ENCODE measurements at regions of chr6 and their contacts with region 1.

Region 1: GRCh38 chr6:13296536-13296997 is 31.8 kb downstream of the TBC1D7 start:
- DNase-seq: no peak
- ATAC-seq: peak; percentile 11
- H3K4me3 Mint-ChIP-seq: peak overlapping the region; percentile 48
- H3K27ac Mint-ChIP-seq: peak overlapping the region; percentile 74
- H3K4me1 Mint-ChIP-seq: peaks cover 71% of the 10 kb centered on the region
- H3K27me3 Mint-ChIP-seq: no peaks in the 10 kb centered on the region
- CTCF ChIP-seq: no peak

Region 2: DNA sequence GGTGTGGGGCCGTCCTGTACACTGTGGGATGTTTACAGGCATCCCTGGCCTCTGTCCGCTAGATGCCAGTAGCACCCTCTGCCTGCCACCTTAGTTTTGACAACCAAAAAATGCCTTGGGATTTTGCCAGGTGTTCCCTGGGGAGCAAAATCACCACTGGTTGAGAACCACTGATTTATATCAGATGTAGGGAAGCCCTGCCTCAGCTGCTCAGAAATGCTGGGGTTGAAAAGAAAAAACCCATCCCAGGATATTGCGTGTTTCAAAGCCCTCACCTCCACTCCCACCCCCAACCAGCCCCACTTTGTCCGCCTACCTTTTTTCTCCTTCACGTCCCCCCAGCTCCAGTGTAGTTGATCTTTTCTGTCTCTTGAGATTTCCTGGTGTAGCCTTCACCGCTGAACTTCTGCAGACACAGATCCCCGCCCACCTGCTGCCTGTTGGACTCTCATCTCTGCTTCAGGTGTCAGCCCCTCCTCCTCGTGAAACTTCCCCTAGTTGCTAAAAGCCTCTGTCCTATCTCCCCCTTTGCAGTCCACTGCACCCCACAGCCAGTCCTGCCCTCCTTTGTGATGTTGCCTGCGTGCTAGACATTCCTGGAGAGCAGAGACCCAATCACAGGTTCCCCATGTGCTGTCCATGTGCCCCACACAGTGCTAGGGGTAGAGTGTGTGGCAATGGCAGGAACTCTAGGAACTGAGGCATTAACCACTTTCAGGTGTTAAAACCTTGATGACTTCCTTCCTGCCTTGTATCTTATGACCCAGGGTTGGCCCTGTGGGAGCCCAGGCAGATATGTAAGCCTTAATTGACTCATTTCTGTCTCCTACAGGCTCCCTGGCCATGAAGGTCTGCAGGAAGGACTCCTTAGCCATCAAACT is 67.1 kb before region 1 on chr6:
- CTCF ChIA-PET with region 1: no interaction called
- POLR2A ChIA-PET with region 1: no interaction called
- intact Hi-C with region 1: loop called (anchors 2 kb)
- DNase-seq: peak; percentile 28
- ATAC-seq: peak; percentile 84
- H3K4me3 Mint-ChIP-seq: peak overlapping the region; percentile 7
- H3K27ac Mint-ChIP-seq: peak overlapping the region; percentile 27
- H3K4me1 Mint-ChIP-seq: peaks cover 30% of the 10 kb centered on the region
- H3K27me3 Mint-ChIP-seq: peaks cover 7% of the 10 kb centered on the region
- CTCF ChIP-seq: no peak

Region 3: GRCh38 chr6:13261464-13261994 is 35.0 kb before region 1 on chr6:
- CTCF ChIA-PET with region 1: interaction called, 3 read pairs
- POLR2A ChIA-PET with region 1: interaction called, 35 read pairs
- intact Hi-C with region 1: loop called (anchors 1 kb)
- DNase-seq: peak; percentile 57
- ATAC-seq: peak; percentile 74
- H3K4me3 Mint-ChIP-seq: peak overlapping the region; percentile 74
- H3K27ac Mint-ChIP-seq: peak overlapping the region; percentile 75
- H3K4me1 Mint-ChIP-seq: peaks cover 92% of the 10 kb centered on the region
- H3K27me3 Mint-ChIP-seq: no peaks in the 10 kb centered on the region
- CTCF ChIP-seq: no peak

Region 4: GRCh38 chr6:13277836-13278563 is 18.6 kb before region 1 on chr6:
- CTCF ChIA-PET with region 1: interaction called, 5 read pairs
- POLR2A ChIA-PET with region 1: interaction called, 67 read pairs
- intact Hi-C with region 1: loop called (anchors 1 kb)
- DNase-seq: no peak
- ATAC-seq: peak; percentile 26
- H3K4me3 Mint-ChIP-seq: peak overlapping the region; percentile 58
- H3K27ac Mint-ChIP-seq: peak overlapping the region; percentile 77
- H3K4me1 Mint-ChIP-seq: peaks cover 75% of the 10 kb centered on the region
- H3K27me3 Mint-ChIP-seq: no peaks in the 10 kb centered on the region
- CTCF ChIP-seq: no peak

Region 5: DNA sequence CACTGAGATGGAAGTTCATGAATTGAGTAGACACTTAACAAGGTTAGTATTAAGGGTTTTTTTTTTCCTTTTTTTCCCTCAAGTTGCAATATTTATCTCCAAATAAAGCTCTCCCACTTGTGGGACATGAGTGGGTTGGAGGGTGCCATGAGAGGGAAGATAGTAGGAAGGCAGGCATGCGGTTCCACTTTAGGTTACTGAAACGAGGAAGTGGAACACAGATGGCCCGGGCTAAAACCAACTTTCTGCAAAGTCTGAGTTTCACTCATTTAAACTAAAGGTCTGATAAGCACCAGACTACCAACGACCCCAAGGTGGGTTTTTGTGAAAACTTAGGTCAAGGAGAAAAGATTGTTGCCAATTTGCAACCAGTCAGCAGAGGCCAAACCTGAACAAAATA is 10.4 kb before region 1 on chr6:
- CTCF ChIA-PET with region 1: interaction called, 6 read pairs
- POLR2A ChIA-PET with region 1: interaction called, 56 read pairs
- intact Hi-C with region 1: loop called (anchors 1 kb)
- DNase-seq: no peak
- ATAC-seq: peak; percentile 71
- H3K4me3 Mint-ChIP-seq: peak overlapping the region; percentile 39
- H3K27ac Mint-ChIP-seq: peak overlapping the region; percentile 59
- H3K4me1 Mint-ChIP-seq: peaks cover 67% of the 10 kb centered on the region
- H3K27me3 Mint-ChIP-seq: no peaks in the 10 kb centered on the region
- CTCF ChIP-seq: no peak

Measured in activated B cell treated with CpG ODN at 0.5 μM for 24 hours (primary cell).